ENCODE measurements at regions of chr10 and their contacts with region 1.

Region 1: GRCh38 chr10:19874773-19875172 is 58.5 kb downstream of the PLXDC2 start:
- DNase-seq: no peak
- H3K4me3 ChIP-seq: no peak overlapping the region
- H3K27ac ChIP-seq: peak overlapping the region in 1 of 2 donors; percentile 5
- H3K4me1 ChIP-seq: peaks cover 0 to 5% of the 10 kb centered on the region in 2 donors
- H3K27me3 ChIP-seq: no peaks in the 10 kb centered on the region
- CTCF ChIP-seq: no peak

Region 2: GRCh38 chr10:19911886-19912285 is 37.1 kb after region 1 on chr10:
- intact Hi-C with region 1: loop called (anchors 5 kb)
- DNase-seq: no peak
- H3K4me3 ChIP-seq: no peak overlapping the region
- H3K27ac ChIP-seq: peak overlapping the region in 1 of 2 donors; percentile 14
- H3K4me1 ChIP-seq: peaks cover 0 to 9% of the 10 kb centered on the region in 2 donors
- H3K27me3 ChIP-seq: no peaks in the 10 kb centered on the region
- CTCF ChIP-seq: no peak

Measured in ascending aorta (tissue), 2 donors.